ENCODE measurements at regions of chr2 and their contacts with region 1.

Region 1: GRCh38 chr2:15177103-15177502 is 384.0 kb downstream of the NBAS start:
- DNase-seq: peak; percentile 85
- H3K4me3 Mint-ChIP-seq: peak overlapping the region; percentile 18
- H3K27ac Mint-ChIP-seq: peak overlapping the region; percentile 19
- H3K4me1 Mint-ChIP-seq: peaks cover 49% of the 10 kb centered on the region
- H3K27me3 Mint-ChIP-seq: peaks cover 8% of the 10 kb centered on the region

Region 2: DNA sequence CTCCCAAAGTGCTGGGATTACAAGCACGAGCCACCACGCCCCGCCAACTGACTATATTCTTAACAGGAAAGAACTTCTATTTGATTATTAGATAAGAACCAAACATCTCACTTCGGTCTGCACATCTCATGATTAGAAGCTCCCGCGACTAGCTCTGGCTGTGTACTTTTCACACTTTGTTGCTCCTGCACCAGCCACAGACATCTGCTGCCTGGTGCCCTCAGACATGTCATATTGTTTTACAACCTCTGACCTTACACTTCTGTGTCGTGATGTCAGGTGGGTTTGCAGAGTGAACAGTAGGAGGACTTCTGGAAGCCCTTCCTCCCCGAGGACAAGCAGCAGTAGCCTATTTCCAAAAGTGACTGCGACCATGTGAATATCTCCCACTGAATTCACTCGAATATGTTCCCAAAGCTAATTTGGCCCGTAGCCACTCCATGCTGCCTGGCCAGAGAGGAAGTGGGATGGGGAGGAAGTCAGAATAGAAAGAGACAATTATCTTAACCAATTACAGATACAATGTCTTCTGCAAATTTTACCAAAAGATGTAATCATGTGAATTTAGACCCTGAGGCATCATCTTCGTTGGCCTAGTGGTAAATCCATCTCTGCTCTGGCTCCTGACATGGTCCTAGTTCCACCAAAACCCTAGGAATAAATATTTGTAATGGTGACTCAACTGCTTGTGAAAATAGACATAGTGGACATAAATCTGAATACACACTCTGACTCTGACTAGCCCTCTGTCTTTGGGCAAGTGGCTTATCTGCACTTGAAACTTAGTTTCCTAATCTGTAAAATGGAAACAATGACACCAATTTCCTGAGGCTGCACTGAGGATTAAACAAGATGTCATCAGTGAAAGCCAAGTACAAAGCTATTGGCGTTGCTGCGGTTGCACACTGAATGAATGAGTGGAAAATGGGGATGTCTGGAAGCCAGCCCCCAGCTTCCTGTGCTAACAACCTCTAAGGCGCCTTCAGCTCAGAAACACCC is 138.4 kb before region 1 on chr2:
- CTCF ChIA-PET with region 1: no interaction called
- POLR2A ChIA-PET with region 1: no interaction called
- intact Hi-C with region 1: loop called (anchors 1 kb)
- DNase-seq: peak; percentile 41
- H3K4me3 Mint-ChIP-seq: no peak overlapping the region
- H3K27ac Mint-ChIP-seq: no peak overlapping the region
- H3K4me1 Mint-ChIP-seq: peaks cover 4% of the 10 kb centered on the region
- H3K27me3 Mint-ChIP-seq: peaks cover 4% of the 10 kb centered on the region

Region 3: DNA sequence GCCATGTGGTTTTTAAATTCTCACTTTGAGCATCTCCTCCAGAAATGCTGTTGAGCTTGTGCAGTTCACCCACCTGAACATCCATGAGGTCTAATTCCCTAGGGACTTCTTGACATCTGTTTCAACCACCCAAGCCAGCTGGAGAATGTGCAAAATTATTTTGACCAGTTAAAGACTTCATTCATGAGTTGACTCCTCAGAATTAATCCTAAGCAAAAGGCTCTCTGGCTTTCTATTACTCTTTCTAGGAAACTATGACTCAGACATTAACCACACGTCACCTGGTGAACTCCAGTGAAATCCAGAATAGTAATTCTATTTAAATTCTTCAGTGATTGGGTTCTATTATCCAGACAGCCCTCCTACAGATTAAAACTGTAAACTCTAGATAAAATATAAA is 136.6 kb after region 1 on chr2:
- CTCF ChIA-PET with region 1: no interaction called
- POLR2A ChIA-PET with region 1: no interaction called
- intact Hi-C with region 1: loop called (anchors 10 kb)
- DNase-seq: no peak
- H3K4me3 Mint-ChIP-seq: no peak overlapping the region
- H3K27ac Mint-ChIP-seq: no peak overlapping the region
- H3K4me1 Mint-ChIP-seq: peaks cover 35% of the 10 kb centered on the region
- H3K27me3 Mint-ChIP-seq: no peaks in the 10 kb centered on the region

Region 4: GRCh38 chr2:15560988-15561573 is 384.0 kb after region 1 on chr2 and contains the start of gene NBAS:
- CTCF ChIA-PET with region 1: no interaction called
- POLR2A ChIA-PET with region 1: no interaction called
- intact Hi-C with region 1: loop called (anchors 1 kb)
- DNase-seq: peak; percentile 91
- H3K4me3 Mint-ChIP-seq: peak within 1 kb of the TSS; percentile 99
- H3K27ac Mint-ChIP-seq: peak within 1 kb of the TSS; percentile 94
- H3K4me1 Mint-ChIP-seq: peaks cover 31% of the 10 kb centered on the region
- H3K27me3 Mint-ChIP-seq: peaks cover 3% of the 10 kb centered on the region
- total RNA-seq, gene NBAS: 40.1 to 44.0 TPM

Region 5: GRCh38 chr2:16727256-16727655 is 1550.2 kb after region 1 on chr2:
- CTCF ChIA-PET with region 1: no interaction called
- POLR2A ChIA-PET with region 1: no interaction called
- intact Hi-C with region 1: loop called (anchors 5 kb)
- DNase-seq: no peak
- H3K4me3 Mint-ChIP-seq: no peak overlapping the region
- H3K27ac Mint-ChIP-seq: no peak overlapping the region
- H3K4me1 Mint-ChIP-seq: peaks cover 7% of the 10 kb centered on the region
- H3K27me3 Mint-ChIP-seq: peaks cover 8% of the 10 kb centered on the region

Measured in activated CD4-positive, alpha-beta memory T cell treated with anti-CD3 and anti-CD28 coated beads for 36 hours (primary cell).